ENCODE measurements at regions of chr19 and their contacts with region 1.

Region 1: DNA sequence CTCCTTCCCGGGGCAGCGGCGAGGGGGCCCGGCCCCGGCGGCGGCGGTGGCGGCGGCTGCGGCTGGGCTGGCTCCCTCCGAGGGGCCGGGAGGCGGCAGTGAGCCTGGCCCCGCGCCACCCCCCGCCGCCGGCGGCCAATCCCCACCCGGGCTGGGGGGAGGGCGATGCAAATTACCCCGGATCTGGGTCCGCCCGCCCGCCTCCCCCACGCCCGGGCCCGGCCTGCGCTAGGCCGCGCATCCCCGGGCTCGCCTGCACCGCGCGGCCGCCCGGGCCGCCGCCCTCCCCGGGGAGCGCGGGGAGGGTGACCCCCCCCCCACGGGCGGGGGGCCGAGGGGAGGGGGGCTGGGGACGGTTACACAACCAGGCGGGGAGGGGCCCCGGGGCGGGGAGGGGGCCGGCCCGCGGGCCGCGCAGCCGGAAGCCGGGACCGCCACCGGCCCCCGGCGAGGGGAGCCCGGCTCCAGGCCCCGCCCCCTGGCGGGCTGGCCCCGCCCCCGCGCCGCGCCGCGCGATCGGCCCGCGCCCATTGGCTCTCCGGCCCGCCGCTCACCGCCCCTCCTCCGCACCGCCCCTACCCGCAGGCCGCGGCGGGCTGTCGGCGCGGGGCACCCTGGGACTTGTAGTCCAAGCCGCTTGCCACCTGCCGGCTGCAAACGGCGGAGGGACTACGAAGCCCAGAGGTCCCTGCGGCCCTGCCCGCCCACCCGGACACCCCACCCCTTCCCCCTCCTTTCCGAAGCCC is 1.1 kb downstream of the ZBTB7A start:
- DNase-seq: peak; percentile 96
- ATAC-seq: peak; percentile 57 to 59
- H3K4me3 ChIP-seq: peak overlapping the region; percentile 85 to 100 (median 97)
- H3K27ac ChIP-seq: peak overlapping the region; percentile 85 to 100 (median 100)
- H3K4me1 ChIP-seq: peaks cover 37 to 38% of the 10 kb centered on the region in 2 donors
- H3K27me3 ChIP-seq: no peaks in the 10 kb centered on the region
- CTCF ChIP-seq: no peak
- POLR2A ChIP-seq: peak in 1 of 2 donors; percentile 57

Region 2: DNA sequence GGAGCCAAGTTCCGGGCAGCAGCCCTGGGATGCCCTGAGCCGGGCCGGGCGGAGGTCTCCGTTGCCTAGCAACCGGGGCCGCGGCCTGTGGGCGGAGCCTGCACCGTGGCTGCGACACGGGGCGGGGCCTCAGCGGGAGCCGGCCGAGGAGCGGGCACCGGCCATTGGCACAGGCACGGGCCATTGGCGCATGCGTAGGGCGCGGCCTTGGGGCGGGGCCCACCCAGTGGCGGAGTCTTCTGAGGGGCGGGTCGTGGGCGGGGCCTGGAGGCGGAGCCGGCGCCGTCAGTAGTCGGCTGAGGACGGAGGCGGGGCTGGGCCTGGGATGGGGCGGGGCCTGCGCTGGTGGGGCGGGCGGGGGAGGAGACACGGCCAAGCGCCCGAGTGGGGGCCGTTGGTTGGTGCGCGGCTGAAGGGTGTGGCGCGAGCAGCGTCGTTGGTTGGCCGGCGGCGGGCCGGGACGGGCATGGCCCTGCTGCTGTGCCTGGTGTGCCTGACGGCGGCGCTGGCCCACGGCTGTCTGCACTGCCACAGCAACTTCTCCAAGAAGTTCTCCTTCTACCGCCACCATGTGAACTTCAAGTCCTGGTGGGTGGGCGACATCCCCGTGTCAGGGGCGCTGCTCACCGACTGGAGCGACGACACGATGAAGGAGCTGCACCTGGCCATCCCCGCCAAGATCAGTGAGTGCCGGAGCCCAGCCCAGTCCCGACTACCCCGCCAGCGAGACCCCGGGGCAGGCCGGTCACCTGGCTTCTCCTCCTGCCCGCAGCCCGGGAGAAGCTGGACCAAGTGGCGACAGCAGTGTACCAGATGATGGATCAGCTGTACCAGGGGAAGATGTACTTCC is 1968.9 kb before region 1 on chr19 and contains the start of gene IZUMO4:
- in situ Hi-C with region 1: no loop called
- intact Hi-C with region 1: loop called (anchors 10 kb)
- DNase-seq: peak; percentile 97 to 98
- ATAC-seq: peak; percentile 86 to 87
- H3K4me3 ChIP-seq: peak within 1 kb of the TSS; percentile 82 to 91 (median 87)
- H3K27ac ChIP-seq: peak within 1 kb of the TSS; percentile 86 to 99 (median 92)
- H3K4me1 ChIP-seq: peaks cover 38 to 39% of the 10 kb centered on the region in 2 donors
- H3K27me3 ChIP-seq: no peaks in the 10 kb centered on the region
- CTCF ChIP-seq: peak; percentile 13 to 56 (median 28)
- POLR2A ChIP-seq: peak; percentile 37 to 40
- total RNA-seq, gene IZUMO4: 0.93 to 1.4 TPM in 2 of 4 donors, not detected in the others

Region 3: DNA sequence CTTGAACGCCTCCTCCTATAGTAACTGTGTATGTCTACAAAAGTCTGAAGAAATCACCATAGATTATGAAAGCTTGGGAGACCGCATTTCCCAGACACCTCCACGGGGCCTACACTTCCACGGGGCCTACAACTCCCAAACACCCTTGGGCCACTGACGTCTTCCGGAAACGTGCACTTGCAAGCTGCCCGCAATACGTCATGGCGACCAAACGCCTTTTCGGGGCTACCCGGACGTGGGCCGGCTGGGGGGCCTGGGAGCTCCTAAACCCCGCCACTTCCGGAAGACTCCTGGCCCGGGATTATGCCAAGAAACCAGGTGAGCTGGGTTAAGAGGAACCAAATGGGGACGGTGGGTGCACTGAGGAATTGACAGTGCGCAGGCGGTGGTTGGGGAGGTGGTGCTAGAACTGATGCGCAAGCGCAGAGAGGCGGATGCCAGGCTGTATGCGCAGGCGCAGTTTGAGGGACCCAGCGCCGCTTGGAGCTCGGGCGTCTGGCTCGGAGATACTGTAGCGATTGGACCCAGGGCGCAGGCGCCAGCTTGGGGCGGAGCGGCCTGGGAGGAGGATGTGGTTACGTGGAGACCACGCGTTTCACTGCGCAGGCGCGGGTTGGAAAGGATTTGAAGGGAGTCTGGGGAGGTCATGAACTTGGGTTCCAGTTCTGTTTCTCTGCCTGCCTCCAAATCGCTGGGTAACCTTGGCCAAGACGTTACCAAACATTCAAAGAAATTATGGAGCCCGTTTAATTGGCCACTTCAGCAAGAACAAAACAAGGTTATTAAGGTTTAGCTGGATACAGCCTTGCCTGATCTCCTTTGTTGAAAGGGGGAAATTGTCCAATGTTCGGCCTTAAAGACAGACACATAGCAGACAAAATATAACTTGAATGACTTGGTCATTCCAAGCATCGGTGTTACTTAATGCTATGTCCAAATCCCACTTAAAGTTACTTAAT is 302.8 kb before region 1 on chr19 and contains the start of gene MRPL54:
- in situ Hi-C with region 1: no loop called
- intact Hi-C with region 1: loop called (anchors 5 kb)
- DNase-seq: peak; percentile 98 to 99
- ATAC-seq: peak; percentile 95 to 96
- H3K4me3 ChIP-seq: peak within 1 kb of the TSS; percentile 83 to 97 (median 90)
- H3K27ac ChIP-seq: peak within 1 kb of the TSS; percentile 92 to 100 (median 98)
- H3K4me1 ChIP-seq: peaks cover 21 to 22% of the 10 kb centered on the region in 2 donors
- H3K27me3 ChIP-seq: no peaks in the 10 kb centered on the region
- CTCF ChIP-seq: no peak
- POLR2A ChIP-seq: peak; percentile 68 to 78
- total RNA-seq, gene MRPL54: 23.3 to 86.3 (median 63.3) TPM

Region 4: DNA sequence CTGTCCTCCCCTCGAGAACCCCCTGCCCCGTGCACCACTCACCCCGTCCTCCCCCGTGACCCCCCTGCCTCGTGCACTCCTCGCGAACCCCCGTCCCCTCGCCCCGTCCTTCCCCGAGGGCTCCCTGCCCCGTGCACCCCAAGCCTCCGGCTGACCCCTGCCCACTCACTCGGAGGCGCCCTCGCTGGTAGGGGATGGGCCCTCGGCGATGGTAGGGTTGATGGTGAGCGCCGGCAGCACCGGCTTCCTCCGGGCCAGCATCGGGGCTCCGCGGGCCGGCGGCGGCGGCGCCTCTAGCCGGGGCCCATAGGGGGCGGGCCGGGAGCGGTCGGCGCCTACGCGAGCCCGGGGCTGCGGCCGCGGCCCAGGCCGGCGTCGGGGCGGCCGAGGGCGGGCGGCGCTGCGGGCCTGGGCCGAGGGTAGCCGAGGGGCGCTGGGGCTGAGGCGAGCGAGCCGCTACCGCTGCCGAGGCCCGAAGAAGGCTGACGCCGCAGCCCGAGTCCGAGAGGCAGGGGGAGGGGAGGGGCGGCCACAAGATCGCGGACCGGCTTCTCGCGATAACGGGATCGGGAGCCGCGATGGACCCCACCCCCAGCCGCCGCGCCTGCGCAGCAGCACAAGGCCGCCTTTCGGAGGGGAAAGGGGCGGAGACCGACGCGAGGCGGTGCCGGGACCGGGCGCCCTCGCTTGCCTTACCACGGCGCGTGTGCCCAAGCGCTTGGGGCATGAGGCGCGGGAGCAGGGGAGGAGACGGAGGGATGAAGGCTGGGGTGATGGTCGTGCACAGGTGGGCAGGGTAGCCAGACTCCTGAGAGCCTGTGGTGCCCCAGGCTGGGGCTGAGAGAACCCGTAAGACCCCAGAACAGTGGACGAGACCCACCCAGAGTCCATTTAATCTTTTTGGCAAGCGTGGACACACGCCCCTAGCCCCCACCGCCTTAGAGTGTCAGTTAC is 58.3 kb after region 1 on chr19 and contains the start of gene MAP2K2:
- in situ Hi-C with region 1: no loop called
- intact Hi-C with region 1: loop called (anchors 1 kb)
- DNase-seq: peak; percentile 90 to 92
- ATAC-seq: peak; percentile 95 to 97
- H3K4me3 ChIP-seq: peak within 1 kb of the TSS; percentile 78 to 98 (median 90)
- H3K27ac ChIP-seq: peak within 1 kb of the TSS; percentile 77 to 86 (median 82)
- H3K4me1 ChIP-seq: peaks cover 8 to 17% of the 10 kb centered on the region in 2 donors
- H3K27me3 ChIP-seq: no peaks in the 10 kb centered on the region
- CTCF ChIP-seq: peak in 3 of 5 experiments; percentile 5 to 33 (median 9)
- POLR2A ChIP-seq: peak; percentile 45 to 73
- total RNA-seq, gene MAP2K2: 101 to 207 (median 138) TPM

Region 5: GRCh38 chr19:4342615-4343369 is 277.2 kb after region 1 on chr19:
- in situ Hi-C with region 1: no loop called
- intact Hi-C with region 1: loop called (anchors 5 kb)
- DNase-seq: peak; percentile 98 to 99
- ATAC-seq: peak; percentile 97 to 98
- H3K4me3 ChIP-seq: peak overlapping the region; percentile 64 to 78 (median 68)
- H3K27ac ChIP-seq: peak overlapping the region; percentile 89 to 96 (median 94)
- H3K4me1 ChIP-seq: peaks cover 10 to 20% of the 10 kb centered on the region in 2 donors
- H3K27me3 ChIP-seq: no peaks in the 10 kb centered on the region
- CTCF ChIP-seq: peak in 1 of 5 experiments; percentile 16
- POLR2A ChIP-seq: peak; percentile 73 to 85

Measured in gastrocnemius medialis (tissue), 4 donors.